ENCODE measurements at regions of chr2 and their contacts with region 1.

Region 1: GRCh38 chr2:27303093-27304025 is 4.9 kb downstream of the UCN start:
- DNase-seq: peak in 1 of 2 experiments; percentile 64
- H3K4me3 ChIP-seq: peak overlapping the region in 1 of 4 experiments; percentile 14; a peak in 1 of 8 replicates
- H3K27ac ChIP-seq: no peak overlapping the region
- H3K4me1 ChIP-seq: peaks cover 0 to 26% (median 13%) of the 10 kb centered on the region in 4 experiments; a peak in 5 of 7 replicates
- H3K27me3 ChIP-seq: peaks cover 29 to 34% (median 32%) of the 10 kb centered on the region in 4 experiments
- CTCF ChIP-seq: peak in 2 of 3 experiments; percentile 74 to 81; a peak in 3 of 4 replicates
- EP300 ChIP-seq: no peak
- POLR2A ChIP-seq: no peak
- RAD21 ChIP-seq: peak; percentile 63 to 70

Region 2: GRCh38 chr2:27241761-27242613 is 61.4 kb before region 1 on chr2:
- CTCF ChIA-PET with region 1: interaction called, 116 read pairs
- POLR2A ChIA-PET with region 1: interaction called, 46 read pairs
- DNase-seq: no peak
- H3K4me3 ChIP-seq: no peak overlapping the region
- H3K27ac ChIP-seq: no peak overlapping the region
- H3K4me1 ChIP-seq: no peaks in the 10 kb centered on the region
- H3K27me3 ChIP-seq: no peaks in the 10 kb centered on the region
- CTCF ChIP-seq: no peak
- EP300 ChIP-seq: no peak
- POLR2A ChIP-seq: no peak
- RAD21 ChIP-seq: no peak

Region 3: DNA sequence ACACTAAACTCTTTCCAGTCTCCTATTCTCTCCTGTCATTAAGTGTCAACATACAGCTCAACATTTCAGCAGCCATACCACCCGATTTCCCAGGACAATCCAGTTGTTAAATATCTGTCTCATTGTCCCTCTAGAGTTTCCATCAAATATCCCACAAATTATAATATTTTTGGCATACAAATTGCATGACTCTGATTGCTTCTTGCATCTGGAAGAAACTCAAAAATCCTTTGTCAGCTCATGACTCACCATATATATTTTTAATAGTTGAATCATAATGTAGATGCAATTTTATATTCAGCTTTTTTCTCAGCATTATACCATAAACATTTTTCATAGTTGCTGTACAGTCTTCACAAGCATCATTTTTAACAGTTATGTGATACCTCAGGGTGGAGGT is 47.7 kb before region 1 on chr2:
- CTCF ChIA-PET with region 1: interaction called, 116 read pairs
- POLR2A ChIA-PET with region 1: interaction called, 46 read pairs
- DNase-seq: no peak
- H3K4me3 ChIP-seq: no peak overlapping the region
- H3K27ac ChIP-seq: no peak overlapping the region
- H3K4me1 ChIP-seq: peaks cover 0 to 8% (median 4%) of the 10 kb centered on the region in 4 experiments; a peak in 6 of 7 replicates
- H3K27me3 ChIP-seq: peaks cover 0 to 12% (median 7%) of the 10 kb centered on the region in 4 experiments; a peak in 5 of 7 replicates
- CTCF ChIP-seq: no peak
- EP300 ChIP-seq: no peak
- POLR2A ChIP-seq: no peak
- RAD21 ChIP-seq: no peak

Region 4: DNA sequence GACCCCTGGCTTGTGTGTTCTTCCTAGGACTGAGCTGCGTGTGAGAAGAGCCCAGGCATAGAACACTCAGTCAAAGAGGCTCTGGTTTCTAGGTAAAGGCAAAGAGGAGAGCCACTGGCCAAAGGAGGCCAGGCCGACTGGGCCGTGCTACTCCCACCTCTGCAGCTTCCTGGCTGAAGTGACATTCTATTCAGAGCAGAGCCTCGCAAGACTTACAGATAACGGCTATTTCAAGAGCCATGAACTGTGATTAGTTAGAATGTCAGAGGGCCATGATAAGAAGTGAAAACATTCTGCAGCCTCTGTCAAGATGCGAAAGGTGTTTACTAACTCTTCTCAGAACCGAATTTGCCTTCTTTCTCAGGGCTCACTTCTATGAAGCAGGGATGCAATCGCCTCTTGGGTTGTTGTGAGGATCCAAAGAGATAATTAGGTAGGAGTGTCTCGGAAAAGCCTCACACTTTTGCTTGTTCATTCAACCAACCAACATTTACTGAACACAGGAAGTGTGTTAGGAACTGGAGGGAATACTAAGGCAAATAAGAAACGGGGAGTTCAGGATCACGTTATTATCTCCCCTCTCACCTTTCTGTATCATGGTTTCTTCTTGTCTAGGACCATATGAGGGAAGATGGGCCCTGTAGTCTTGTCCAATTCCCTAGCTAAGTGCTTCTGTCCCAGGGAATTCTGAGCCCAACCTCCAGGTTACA is 31.6 kb before region 1 on chr2:
- CTCF ChIA-PET with region 1: interaction called, 413 read pairs
- POLR2A ChIA-PET with region 1: interaction called, 4 read pairs
- DNase-seq: no peak
- H3K4me3 ChIP-seq: no peak overlapping the region
- H3K27ac ChIP-seq: no peak overlapping the region
- H3K4me1 ChIP-seq: peaks cover 0 to 5% (median 0%) of the 10 kb centered on the region in 4 experiments; a peak in 2 of 7 replicates
- H3K27me3 ChIP-seq: peaks cover 0 to 7% (median 2%) of the 10 kb centered on the region in 4 experiments; a peak in 2 of 7 replicates
- CTCF ChIP-seq: no peak
- EP300 ChIP-seq: no peak
- POLR2A ChIP-seq: no peak
- RAD21 ChIP-seq: no peak

Region 5: GRCh38 chr2:27313882-27314645 is 10.7 kb after region 1 on chr2:
- CTCF ChIA-PET with region 1: interaction called, 128 read pairs
- POLR2A ChIA-PET with region 1: interaction called, 105 read pairs
- DNase-seq: no peak
- H3K4me3 ChIP-seq: no peak overlapping the region
- H3K27ac ChIP-seq: no peak overlapping the region
- H3K4me1 ChIP-seq: peaks cover 0 to 2% (median 0%) of the 10 kb centered on the region in 4 experiments; a peak in 1 of 7 replicates
- H3K27me3 ChIP-seq: no peaks in the 10 kb centered on the region; a peak in 3 of 7 replicates
- CTCF ChIP-seq: no peak
- EP300 ChIP-seq: no peak
- POLR2A ChIP-seq: no peak
- RAD21 ChIP-seq: no peak

Region 6: DNA sequence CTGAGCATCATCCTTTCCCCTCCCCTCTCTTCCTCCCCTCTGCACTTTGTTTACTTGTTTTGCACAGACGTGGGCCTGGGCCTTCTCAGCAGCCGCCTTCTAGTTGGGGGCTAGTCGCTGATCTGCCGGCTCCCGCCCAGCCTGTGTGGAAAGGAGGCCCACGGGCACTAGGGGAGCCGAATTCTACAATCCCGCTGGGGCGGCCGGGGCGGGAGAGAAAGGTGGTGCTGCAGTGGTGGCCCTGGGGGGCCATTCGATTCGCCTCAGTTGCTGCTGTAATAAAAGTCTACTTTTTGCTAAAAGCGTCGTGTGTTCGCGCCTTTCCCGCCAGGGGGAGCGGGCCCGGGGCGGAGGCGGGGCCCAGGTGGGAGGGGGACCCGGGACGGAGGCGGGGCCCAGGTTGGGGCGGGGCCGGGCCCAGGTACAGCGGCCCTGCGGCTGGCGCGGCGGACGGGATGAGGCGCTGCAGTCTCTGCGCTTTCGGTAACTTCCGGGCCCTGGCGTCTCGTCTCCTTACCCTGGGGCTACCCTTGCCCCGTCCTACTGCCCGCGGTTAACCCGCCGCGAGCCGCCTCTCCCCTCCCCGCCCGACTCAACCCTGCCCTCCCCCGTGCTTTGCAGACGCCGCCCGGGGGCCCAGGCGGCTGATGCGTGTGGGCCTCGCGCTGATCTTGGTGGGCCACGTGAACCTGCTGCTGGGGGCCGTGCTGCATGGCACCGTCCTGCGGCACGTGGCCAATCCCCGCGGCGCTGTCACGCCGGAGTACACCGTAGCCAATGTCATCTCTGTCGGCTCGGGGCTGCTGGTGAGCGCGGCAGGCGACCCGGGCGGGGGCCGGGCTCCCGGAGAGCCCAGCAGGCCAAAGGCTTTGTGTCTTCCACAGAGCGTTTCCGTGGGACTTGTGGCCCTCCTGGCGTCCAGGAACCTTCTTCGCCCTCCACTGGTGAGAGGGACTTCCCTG is 138.9 kb after region 1 on chr2 and contains the start of gene KRTCAP3:
- CTCF ChIA-PET with region 1: no interaction called
- POLR2A ChIA-PET with region 1: no interaction called
- DNase-seq: peak; percentile 53 to 94
- H3K4me3 ChIP-seq: peak within 1 kb of the TSS; percentile 49 to 76 (median 63)
- H3K27ac ChIP-seq: no peak within 1 kb of the TSS
- H3K4me1 ChIP-seq: peaks cover 0 to 14% (median 8%) of the 10 kb centered on the region in 4 experiments; a peak in 5 of 7 replicates
- H3K27me3 ChIP-seq: no peaks in the 10 kb centered on the region
- CTCF ChIP-seq: peak; percentile 9 to 66 (median 62)
- EP300 ChIP-seq: no peak
- POLR2A ChIP-seq: peak; percentile 40 to 57; a peak in 2 of 3 replicates
- RAD21 ChIP-seq: peak; percentile 26 to 42; a peak in 2 of 4 replicates
- total RNA-seq, gene KRTCAP3: 50.1 and 55.4 TPM in 2 replicates

Region 7: GRCh38 chr2:27453967-27454366 is 150.6 kb after region 1 on chr2:
- CTCF ChIA-PET with region 1: no interaction called
- POLR2A ChIA-PET with region 1: no interaction called
- DNase-seq: no peak
- H3K4me3 ChIP-seq: no peak overlapping the region
- H3K27ac ChIP-seq: no peak overlapping the region
- H3K4me1 ChIP-seq: no peaks in the 10 kb centered on the region
- H3K27me3 ChIP-seq: no peaks in the 10 kb centered on the region
- CTCF ChIP-seq: peak; percentile 11 to 33 (median 13); a peak in 3 of 4 replicates
- EP300 ChIP-seq: no peak
- POLR2A ChIP-seq: no peak
- RAD21 ChIP-seq: peak; percentile 16 to 52; a peak in 3 of 4 replicates

Region 8: GRCh38 chr2:27485496-27485895 is 182.1 kb after region 1 on chr2:
- CTCF ChIA-PET with region 1: no interaction called
- POLR2A ChIA-PET with region 1: no interaction called
- DNase-seq: no peak
- H3K4me3 ChIP-seq: no peak overlapping the region
- H3K27ac ChIP-seq: no peak overlapping the region
- H3K4me1 ChIP-seq: peaks cover 0 to 8% (median 2%) of the 10 kb centered on the region in 4 experiments; a peak in 5 of 7 replicates
- H3K27me3 ChIP-seq: no peaks in the 10 kb centered on the region
- CTCF ChIP-seq: no peak
- EP300 ChIP-seq: no peak
- POLR2A ChIP-seq: no peak
- RAD21 ChIP-seq: no peak

Measured in H1 (cell line).